Activated CD4-positive, alpha-beta T cell treated with anti-CD3 and anti-CD28 coated beads for 36 hours (primary cell): ENCODE measurements at regions of chr6 and their contacts with region 1.

Region 1: DNA sequence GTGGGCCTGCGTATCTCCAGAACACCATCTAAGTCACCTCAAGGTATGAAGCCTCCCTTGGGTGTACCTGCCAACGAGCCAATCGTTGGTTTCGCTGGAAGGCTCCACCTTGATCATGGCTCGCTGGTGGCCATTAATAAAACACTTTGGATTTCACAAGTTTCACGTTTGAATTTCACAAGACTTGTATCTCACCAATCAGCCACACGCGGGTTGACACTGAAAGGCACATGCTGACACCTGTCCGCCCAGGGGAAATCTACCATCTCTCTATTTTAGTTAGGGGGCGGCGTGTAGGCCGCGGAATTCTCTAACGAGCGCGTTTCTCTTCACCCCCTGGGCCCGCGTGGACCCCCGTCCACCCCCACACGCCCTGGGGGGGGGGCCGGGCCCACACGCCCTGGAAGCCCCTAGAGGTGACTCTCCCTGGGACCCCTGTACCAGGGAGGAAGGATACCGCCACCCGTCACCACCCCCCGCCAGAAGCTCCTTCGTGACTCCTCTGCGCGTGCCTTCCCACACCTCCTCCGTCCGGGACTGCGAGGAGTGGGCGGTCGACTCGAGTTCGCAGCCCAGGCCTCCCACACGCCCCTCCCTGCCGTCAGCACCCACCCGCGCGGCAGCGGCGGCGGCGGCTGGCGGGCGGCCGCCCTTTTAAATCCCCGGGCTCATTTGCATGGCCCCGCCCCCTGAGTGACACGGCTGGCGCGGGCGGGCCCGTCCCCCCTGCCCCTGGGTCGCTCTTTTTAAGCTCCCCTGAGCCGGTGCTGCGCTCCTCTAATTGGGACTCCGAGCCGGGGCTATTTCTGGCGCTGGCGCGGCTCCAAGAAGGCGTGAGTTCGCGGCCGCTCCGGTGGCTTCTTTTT is at the start of gene HMGA1:
- DNase-seq: peak; percentile 94
- ATAC-seq: peak; percentile 70
- H3K4me3 Mint-ChIP-seq: peak within 1 kb of the TSS; percentile 85
- H3K27ac Mint-ChIP-seq: peak within 1 kb of the TSS; percentile 91
- H3K4me1 Mint-ChIP-seq: peaks cover 41% of the 10 kb centered on the region
- H3K27me3 Mint-ChIP-seq: no peaks in the 10 kb centered on the region
- total RNA-seq, gene HMGA1: 569 to 649 TPM

Region 2: DNA sequence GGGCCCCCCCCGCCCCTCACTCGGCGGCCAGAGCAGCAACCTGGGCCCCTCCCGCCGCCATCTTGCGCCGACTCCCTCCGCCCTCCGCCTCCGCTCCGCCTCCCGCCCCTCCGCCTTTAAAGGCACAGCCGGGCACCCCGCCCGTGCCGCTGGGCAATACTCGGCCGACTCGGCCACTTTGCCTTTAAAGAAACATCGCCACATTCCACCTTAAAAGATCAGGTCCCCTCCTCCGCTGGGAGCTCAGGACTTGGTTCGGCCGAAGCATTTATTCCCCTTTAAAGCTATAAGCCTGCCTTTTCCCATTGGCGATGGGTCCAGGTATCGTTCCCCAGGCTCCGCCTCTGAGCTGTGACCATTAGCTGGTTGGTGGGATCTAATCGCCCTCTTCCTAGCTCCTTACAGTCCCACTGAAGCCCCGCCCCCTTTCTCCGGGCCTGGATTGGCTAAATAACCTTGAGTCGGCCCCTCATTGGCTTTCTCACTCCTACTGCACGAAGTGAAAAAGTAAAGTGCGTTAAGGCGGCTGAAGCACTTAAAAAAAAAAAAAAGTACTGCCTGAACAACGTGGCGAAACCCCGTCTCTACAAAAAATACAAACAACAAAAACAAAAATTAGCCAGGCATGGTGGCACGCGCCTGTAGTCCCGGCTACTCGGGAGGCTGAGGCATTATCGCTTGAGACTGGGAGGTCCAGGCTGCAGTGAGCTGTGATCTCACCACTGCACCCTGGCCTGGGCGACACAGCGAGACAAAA is 918.5 kb before region 1 on chr6 and contains the start of gene ZBTB22:
- CTCF ChIA-PET with region 1: no interaction called
- POLR2A ChIA-PET with region 1: no interaction called
- intact Hi-C with region 1: loop called in 1 of 2 experiments (anchors 10 kb)
- DNase-seq: peak; percentile 98
- ATAC-seq: peak; percentile 69
- H3K4me3 Mint-ChIP-seq: peak within 1 kb of the TSS; percentile 80
- H3K27ac Mint-ChIP-seq: peak within 1 kb of the TSS; percentile 93
- H3K4me1 Mint-ChIP-seq: peaks cover 70% of the 10 kb centered on the region
- H3K27me3 Mint-ChIP-seq: no peaks in the 10 kb centered on the region
- total RNA-seq, gene ZBTB22: 9.0 to 9.9 TPM

Region 3: DNA sequence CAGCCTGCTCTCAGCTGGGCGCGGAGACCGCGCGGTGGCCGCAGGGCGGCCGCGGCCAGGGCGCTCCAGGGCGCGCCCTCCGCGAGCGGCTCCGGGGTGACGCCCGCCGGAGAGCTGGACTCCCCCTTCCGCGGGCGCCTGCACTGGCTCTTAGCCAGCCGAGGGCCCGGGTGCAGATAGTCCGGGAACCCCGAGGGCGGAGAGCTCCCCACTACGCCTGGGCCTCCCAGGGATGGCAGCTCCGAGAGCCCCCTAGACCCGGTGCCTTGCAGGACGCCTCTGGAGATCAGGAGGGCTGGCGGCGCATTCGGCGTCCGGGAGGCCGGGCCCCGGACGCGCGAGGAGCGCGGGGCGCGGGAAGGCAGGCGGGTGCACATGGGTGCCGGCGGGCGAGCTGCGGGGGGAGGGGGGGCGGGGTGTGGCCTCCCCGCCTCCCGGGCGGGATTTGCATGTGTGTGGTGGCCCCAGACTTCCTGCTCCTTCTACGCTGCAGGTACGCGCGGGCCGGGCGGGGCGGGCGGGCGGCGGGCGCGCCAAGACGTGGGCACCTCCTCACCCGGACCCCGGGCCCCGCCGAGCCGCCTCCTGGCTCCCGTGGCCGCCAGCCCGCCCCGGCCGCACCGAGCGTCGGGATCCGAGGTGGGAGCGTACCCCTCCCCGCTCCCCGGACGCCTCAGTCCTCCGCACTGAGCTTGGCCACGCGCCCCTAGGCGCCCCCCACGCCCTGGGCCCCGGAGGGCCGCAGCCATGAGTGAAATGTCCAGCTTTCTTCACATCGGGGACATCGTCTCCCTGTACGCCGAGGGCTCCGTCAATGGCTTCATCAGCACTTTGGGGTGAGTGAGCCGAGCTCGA is 615.3 kb before region 1 on chr6 and contains the start of gene ITPR3:
- CTCF ChIA-PET with region 1: no interaction called
- POLR2A ChIA-PET with region 1: no interaction called
- intact Hi-C with region 1: loop called in 1 of 2 experiments (anchors 5 kb)
- DNase-seq: peak; percentile 86
- ATAC-seq: peak; percentile 85
- H3K4me3 Mint-ChIP-seq: peak within 1 kb of the TSS; percentile 94
- H3K27ac Mint-ChIP-seq: peak within 1 kb of the TSS; percentile 91
- H3K4me1 Mint-ChIP-seq: peaks cover 46% of the 10 kb centered on the region
- H3K27me3 Mint-ChIP-seq: no peaks in the 10 kb centered on the region
- total RNA-seq, gene ITPR3: 42.6 to 42.9 TPM

Region 4: GRCh38 chr6:34182751-34183531 is 53.4 kb before region 1 on chr6:
- CTCF ChIA-PET with region 1: no interaction called
- POLR2A ChIA-PET with region 1: interaction called, 5 read pairs
- intact Hi-C with region 1: loop called (anchors 5 kb)
- DNase-seq: peak; percentile 78
- ATAC-seq: peak; percentile 95
- H3K4me3 Mint-ChIP-seq: peak overlapping the region; percentile 65
- H3K27ac Mint-ChIP-seq: peak overlapping the region; percentile 95
- H3K4me1 Mint-ChIP-seq: peaks cover 20% of the 10 kb centered on the region
- H3K27me3 Mint-ChIP-seq: no peaks in the 10 kb centered on the region

Region 5: DNA sequence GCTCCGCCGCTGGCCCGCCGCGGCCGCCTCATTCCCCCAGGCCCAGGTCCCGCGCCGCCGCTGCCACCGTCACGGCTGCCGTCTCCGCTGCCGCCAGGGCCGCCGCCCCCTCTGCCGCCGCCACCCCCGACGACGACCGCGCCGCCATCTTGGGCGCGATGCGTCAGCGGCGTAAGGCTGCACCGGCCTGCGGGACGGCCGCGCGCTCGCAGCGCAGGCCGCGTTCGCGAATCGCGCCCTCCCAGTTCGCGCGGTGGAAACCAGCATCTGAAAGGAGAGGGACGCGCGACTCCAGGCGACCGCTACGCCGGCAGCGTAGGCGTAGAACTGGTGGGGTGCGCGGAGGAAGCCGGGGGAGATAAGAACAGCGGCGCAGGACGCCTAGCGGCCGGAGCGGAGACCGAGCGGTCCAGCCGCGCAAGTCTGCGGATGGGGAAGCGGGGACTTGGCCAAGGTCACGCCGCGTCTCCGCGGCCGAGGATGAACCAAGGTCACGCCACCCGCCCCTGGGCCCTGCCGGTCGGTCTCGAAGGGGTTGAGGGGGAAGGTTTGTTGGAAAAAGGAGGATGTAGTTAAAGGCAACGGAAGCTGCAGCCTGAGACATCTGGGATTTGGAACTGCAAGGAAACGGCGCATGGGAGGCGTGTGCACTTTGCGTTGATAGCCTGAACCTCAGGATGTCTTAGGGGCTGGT is 156.3 kb after region 1 on chr6 and contains the start of gene NUDT3:
- CTCF ChIA-PET with region 1: no interaction called
- POLR2A ChIA-PET with region 1: no interaction called
- intact Hi-C with region 1: loop called (anchors 1 to 2 kb)
- DNase-seq: peak; percentile 96
- ATAC-seq: peak; percentile 92
- H3K4me3 Mint-ChIP-seq: no peak within 1 kb of the TSS
- H3K27ac Mint-ChIP-seq: peak within 1 kb of the TSS; percentile 95
- H3K4me1 Mint-ChIP-seq: peaks cover 21% of the 10 kb centered on the region
- H3K27me3 Mint-ChIP-seq: no peaks in the 10 kb centered on the region
- total RNA-seq, gene NUDT3: 13.3 to 13.6 TPM

Region 6: GRCh38 chr6:34791701-34792235 is 555.4 kb after region 1 on chr6 and contains the start of gene BLTP3A:
- CTCF ChIA-PET with region 1: no interaction called
- POLR2A ChIA-PET with region 1: no interaction called
- intact Hi-C with region 1: loop called in 1 of 2 experiments (anchors 5 kb)
- DNase-seq: peak; percentile 88
- ATAC-seq: peak; percentile 95
- H3K4me3 Mint-ChIP-seq: peak within 1 kb of the TSS; percentile 99
- H3K27ac Mint-ChIP-seq: peak within 1 kb of the TSS; percentile 95
- H3K4me1 Mint-ChIP-seq: peaks cover 21% of the 10 kb centered on the region
- H3K27me3 Mint-ChIP-seq: no peaks in the 10 kb centered on the region
- total RNA-seq, gene BLTP3A: 17.0 to 21.0 TPM